ENCODE measurements at regions of chr14 and their contacts with region 1.

Region 1: GRCh38 chr14:73295198-73295796 is 58.0 kb downstream of the PAPLN start:
- DNase-seq: no peak
- H3K4me3 ChIP-seq: no peak overlapping the region
- CTCF ChIP-seq: no peak
- POLR2A ChIP-seq: no peak

Region 2: GRCh38 chr14:73180385-73180805 is 114.9 kb before region 1 on chr14:
- intact Hi-C with region 1: no loop called
- DNase-seq: peak in 1 of 2 donors; percentile 52
- H3K4me3 ChIP-seq: no peak overlapping the region
- CTCF ChIP-seq: no peak
- POLR2A ChIP-seq: no peak

Region 3: GRCh38 chr14:73467377-73467776 is 172.1 kb after region 1 on chr14:
- intact Hi-C with region 1: loop called (anchors 5 kb)
- DNase-seq: peak in 1 of 2 donors; percentile 79
- H3K4me3 ChIP-seq: no peak overlapping the region
- CTCF ChIP-seq: no peak
- POLR2A ChIP-seq: no peak

Measured in lower leg skin (tissue), 4 donors.